Naive thymus-derived CD4-positive, alpha-beta T cell (primary cell): ENCODE measurements at regions of chr18 and their contacts with region 1.

Region 1: DNA sequence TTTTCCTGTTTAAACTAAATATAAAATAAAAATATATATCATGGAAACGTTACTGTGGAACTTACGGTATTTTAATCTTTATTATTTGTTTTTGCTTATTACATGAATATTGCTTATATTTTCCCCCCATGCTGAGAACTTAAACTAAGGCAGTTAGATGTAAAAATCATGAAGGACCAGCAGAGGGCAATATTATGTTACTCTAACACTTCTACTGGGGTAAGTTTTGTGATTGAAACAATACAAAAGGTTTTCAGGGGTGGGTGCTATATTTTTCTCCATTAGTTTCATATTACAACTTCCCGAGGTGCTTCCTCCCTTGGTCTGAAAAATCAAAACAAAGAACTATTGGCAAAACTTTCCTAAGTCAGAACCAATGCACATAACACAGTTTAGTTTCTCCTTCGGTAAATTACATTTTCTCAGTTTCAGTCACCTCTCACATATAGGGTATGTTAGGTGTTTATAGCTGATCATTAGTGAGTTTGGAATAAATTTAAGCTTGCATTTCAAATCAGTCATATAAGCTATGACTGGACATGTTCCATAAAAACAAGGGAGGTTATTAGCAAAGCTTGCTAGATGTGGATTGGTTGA is 54.8 kb downstream of the ZNF407 start:
- DNase-seq: peak in 7 of 9 donors; percentile 7 to 48 (median 36)
- ATAC-seq: no peak
- H3K4me3 ChIP-seq: no peak overlapping the region
- H3K4me3 Mint-ChIP-seq: no peak overlapping the region
- H3K27ac ChIP-seq: no peak overlapping the region
- H3K27ac Mint-ChIP-seq: no peak overlapping the region
- H3K4me1 ChIP-seq: no peaks in the 10 kb centered on the region
- H3K4me1 Mint-ChIP-seq: peaks cover 0 to 17% (median 5%) of the 10 kb centered on the region in 7 donors
- H3K27me3 ChIP-seq: no peaks in the 10 kb centered on the region
- H3K27me3 Mint-ChIP-seq: no peaks in the 10 kb centered on the region

Region 2: GRCh38 chr18:74896390-74896991 is 244.0 kb after region 1 on chr18:
- CTCF ChIA-PET with region 1: no interaction called
- POLR2A ChIA-PET with region 1: no interaction called
- intact Hi-C with region 1: loop called in 1 of 2 experiments (anchors 10 kb)
- DNase-seq: peak in 6 of 9 donors; percentile 19 to 45 (median 36)
- ATAC-seq: peak; percentile 76
- H3K4me3 ChIP-seq: no peak overlapping the region
- H3K4me3 Mint-ChIP-seq: no peak overlapping the region
- H3K27ac ChIP-seq: no peak overlapping the region
- H3K27ac Mint-ChIP-seq: peak overlapping the region in 2 of 9 donors; percentile 1 to 11
- H3K4me1 ChIP-seq: no peaks in the 10 kb centered on the region
- H3K4me1 Mint-ChIP-seq: peaks cover 0 to 21% (median 7%) of the 10 kb centered on the region in 7 donors
- H3K27me3 ChIP-seq: no peaks in the 10 kb centered on the region
- H3K27me3 Mint-ChIP-seq: no peaks in the 10 kb centered on the region

Region 3: DNA sequence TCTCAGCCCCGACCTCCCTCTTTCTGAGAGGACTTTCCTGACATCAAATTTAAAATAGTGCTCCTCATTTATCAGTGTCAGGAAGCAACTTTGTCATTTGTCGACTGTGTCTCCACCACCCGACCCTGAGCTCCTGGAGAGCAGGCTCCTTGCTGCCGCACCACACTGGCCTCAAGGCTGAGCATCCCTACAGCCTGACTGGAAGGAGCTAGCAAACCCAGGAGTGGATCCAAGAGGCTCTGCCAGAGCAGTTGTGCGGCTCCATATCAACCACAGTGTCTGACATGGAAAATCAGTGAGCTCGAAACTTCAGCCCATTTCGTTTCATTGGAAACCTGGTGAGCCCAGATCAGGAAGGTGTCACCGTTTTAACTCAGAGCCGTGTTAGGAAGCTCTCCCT is 431.3 kb after region 1 on chr18:
- CTCF ChIA-PET with region 1: no interaction called
- POLR2A ChIA-PET with region 1: no interaction called
- intact Hi-C with region 1: loop called in 1 of 2 experiments (anchors 1 kb)
- DNase-seq: no peak
- ATAC-seq: no peak
- H3K4me3 ChIP-seq: no peak overlapping the region
- H3K4me3 Mint-ChIP-seq: no peak overlapping the region
- H3K27ac ChIP-seq: no peak overlapping the region
- H3K27ac Mint-ChIP-seq: no peak overlapping the region
- H3K4me1 ChIP-seq: no peaks in the 10 kb centered on the region
- H3K4me1 Mint-ChIP-seq: no peaks in the 10 kb centered on the region
- H3K27me3 ChIP-seq: no peaks in the 10 kb centered on the region
- H3K27me3 Mint-ChIP-seq: peaks cover 0 to 6% (median 0%) of the 10 kb centered on the region in 5 donors

Region 4: DNA sequence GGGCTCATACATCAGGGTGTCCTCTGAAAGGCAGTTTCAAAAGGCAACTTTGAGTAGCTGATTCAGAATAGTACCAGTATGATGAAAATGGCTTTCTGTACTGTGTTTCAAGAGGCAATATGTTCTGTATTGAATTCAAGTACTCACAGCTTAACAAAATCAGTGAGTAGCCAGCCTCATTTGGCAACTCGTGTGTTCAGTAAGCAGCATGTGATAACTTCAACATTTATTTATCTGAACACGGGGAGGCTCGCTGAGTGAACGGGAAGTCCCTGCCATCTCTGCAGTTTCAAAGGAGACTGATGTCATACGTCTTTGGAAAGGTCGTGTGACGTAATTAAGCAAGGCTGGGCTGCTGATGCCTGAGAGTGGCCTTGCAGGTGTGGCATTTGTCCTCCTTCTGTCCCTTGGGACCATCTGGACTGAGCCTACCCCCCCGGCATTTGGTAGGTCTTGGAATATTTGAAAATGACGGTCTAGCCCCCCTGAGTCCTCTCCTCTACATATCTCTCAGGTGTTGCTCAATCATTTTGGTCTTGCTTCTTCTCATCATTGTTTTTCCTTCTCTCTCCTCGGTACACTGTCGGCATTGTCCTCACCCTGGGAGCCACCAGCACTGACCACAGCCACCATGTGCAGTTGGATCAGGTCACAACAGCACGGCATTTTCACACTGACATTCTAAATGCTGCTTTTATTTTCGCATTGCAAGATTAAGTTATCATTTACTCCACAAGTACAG is 712.2 kb after region 1 on chr18:
- CTCF ChIA-PET with region 1: no interaction called
- POLR2A ChIA-PET with region 1: no interaction called
- intact Hi-C with region 1: loop called in 1 of 2 experiments (anchors 1 kb)
- DNase-seq: no peak
- ATAC-seq: no peak
- H3K4me3 ChIP-seq: no peak overlapping the region
- H3K4me3 Mint-ChIP-seq: no peak overlapping the region
- H3K27ac ChIP-seq: no peak overlapping the region
- H3K27ac Mint-ChIP-seq: peak overlapping the region in 1 of 9 donors; percentile 12
- H3K4me1 ChIP-seq: no peaks in the 10 kb centered on the region
- H3K4me1 Mint-ChIP-seq: peaks cover 0 to 1% (median 0%) of the 10 kb centered on the region in 7 donors
- H3K27me3 ChIP-seq: no peaks in the 10 kb centered on the region
- H3K27me3 Mint-ChIP-seq: peaks cover 0 to 2% (median under 1%) of the 10 kb centered on the region in 5 donors

Region 5: DNA sequence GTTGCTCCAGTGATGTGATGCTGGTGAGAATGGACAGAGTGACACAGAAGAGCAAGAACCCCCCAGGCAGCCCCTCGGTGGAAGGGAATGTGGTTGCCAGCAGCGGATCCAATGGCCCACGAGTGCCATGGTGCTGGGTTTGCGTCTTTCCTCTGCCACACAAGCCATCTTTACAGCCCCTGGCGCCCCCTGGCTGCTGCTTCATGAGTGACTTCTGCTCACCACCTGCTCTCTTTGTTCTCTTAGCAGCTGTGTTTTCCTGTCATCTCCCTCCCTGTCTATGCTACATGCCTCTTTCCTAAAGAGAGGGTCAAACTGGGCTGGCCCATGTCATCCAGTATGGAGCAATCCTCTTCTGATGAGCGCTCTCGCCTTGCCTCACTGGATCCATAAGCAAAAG is 1075.0 kb after region 1 on chr18:
- CTCF ChIA-PET with region 1: no interaction called
- POLR2A ChIA-PET with region 1: no interaction called
- intact Hi-C with region 1: loop called (anchors 2 to 5 kb)
- DNase-seq: peak in 5 of 9 donors; percentile 1 to 18 (median 8)
- ATAC-seq: no peak
- H3K4me3 ChIP-seq: no peak overlapping the region
- H3K4me3 Mint-ChIP-seq: no peak overlapping the region
- H3K27ac ChIP-seq: no peak overlapping the region
- H3K27ac Mint-ChIP-seq: no peak overlapping the region
- H3K4me1 ChIP-seq: no peaks in the 10 kb centered on the region
- H3K4me1 Mint-ChIP-seq: no peaks in the 10 kb centered on the region
- H3K27me3 ChIP-seq: no peaks in the 10 kb centered on the region
- H3K27me3 Mint-ChIP-seq: peaks cover 3 to 71% (median 33%) of the 10 kb centered on the region in 5 donors

Region 6: DNA sequence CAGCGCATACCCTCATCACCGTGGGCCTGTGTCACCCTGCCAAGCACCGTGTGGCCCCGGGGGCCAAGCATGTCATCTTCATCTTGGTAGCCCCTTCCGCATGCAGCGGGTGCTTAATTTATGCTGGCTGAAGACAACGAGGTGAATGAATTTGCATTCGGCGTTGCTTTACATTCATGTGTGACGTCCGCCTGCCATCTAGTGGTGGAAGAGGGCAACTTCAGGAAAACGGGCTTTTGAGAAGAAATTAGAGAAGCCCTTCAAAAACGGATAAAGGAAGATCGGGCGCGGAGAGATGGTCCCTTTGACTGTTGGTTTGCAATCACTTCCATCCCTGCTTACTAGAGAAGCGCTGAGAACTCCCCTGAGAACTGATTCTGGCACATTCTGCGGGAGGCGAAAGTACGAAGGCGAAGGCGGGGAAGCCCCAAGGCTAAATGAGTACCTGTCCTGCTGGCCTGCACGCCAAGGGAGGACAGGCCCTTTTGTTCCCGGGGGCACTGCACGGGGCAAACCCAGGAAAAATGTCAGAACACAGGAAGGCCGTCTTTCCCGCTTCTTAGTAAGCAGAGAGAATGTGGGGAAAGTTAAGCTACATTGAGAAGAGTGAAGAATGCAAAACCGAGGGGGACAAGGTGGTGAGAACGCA is 1696.7 kb after region 1 on chr18:
- CTCF ChIA-PET with region 1: no interaction called
- POLR2A ChIA-PET with region 1: no interaction called
- intact Hi-C with region 1: loop called (anchors 1 to 2 kb)
- DNase-seq: peak in 8 of 9 donors; percentile 42 to 70 (median 60)
- ATAC-seq: peak; percentile 68
- H3K4me3 ChIP-seq: no peak overlapping the region
- H3K4me3 Mint-ChIP-seq: peak overlapping the region in 5 of 10 donors; percentile 4 to 49 (median 12)
- H3K27ac ChIP-seq: no peak overlapping the region
- H3K27ac Mint-ChIP-seq: peak overlapping the region in 2 of 9 donors; percentile 5 to 39
- H3K4me1 ChIP-seq: peaks cover 0 to 3% of the 10 kb centered on the region in 2 donors
- H3K4me1 Mint-ChIP-seq: peaks cover 4 to 9% (median 7%) of the 10 kb centered on the region in 7 donors
- H3K27me3 ChIP-seq: no peaks in the 10 kb centered on the region
- H3K27me3 Mint-ChIP-seq: peaks cover 0 to 9% (median 0%) of the 10 kb centered on the region in 5 donors